Uterus (tissue), 4 donors: ENCODE measurements at regions of chr3 and their contacts with region 1.

Region 1: GRCh38 chr3:6644070-6644929 is 216.6 kb upstream of the GRM7 start:
- DNase-seq: no peak
- H3K4me3 ChIP-seq: no peak overlapping the region
- H3K27ac ChIP-seq: no peak overlapping the region
- H3K4me1 ChIP-seq: no peaks in the 10 kb centered on the region
- H3K27me3 ChIP-seq: no peaks in the 10 kb centered on the region
- CTCF ChIP-seq: no peak
- POLR2A ChIP-seq: no peak

Region 2: GRCh38 chr3:6416049-6416661 is 228.1 kb before region 1 on chr3:
- intact Hi-C with region 1: no loop called
- DNase-seq: no peak
- H3K4me3 ChIP-seq: no peak overlapping the region
- H3K27ac ChIP-seq: no peak overlapping the region
- H3K4me1 ChIP-seq: no peaks in the 10 kb centered on the region
- H3K27me3 ChIP-seq: no peaks in the 10 kb centered on the region
- CTCF ChIP-seq: no peak
- POLR2A ChIP-seq: no peak

Region 3: DNA sequence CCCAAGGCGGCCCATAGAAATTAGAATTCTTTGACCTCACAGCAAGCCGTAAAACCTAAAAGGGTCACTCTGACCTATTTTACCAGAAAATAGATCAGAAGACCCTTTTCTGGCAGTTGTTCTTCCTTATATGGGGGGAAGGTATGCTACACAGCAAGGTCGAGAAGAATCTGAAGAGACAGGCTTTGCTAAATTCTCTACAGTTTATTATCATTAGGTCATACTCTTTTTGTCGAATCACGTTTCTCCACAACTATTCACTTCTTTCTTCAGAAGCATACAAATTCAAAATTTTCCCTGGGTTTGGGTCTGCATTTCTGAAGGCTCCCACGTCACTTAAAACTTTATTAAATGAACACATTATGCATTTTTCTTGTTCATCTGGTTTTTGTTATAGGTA is 12.9 kb before region 1 on chr3:
- intact Hi-C with region 1: loop called (anchors 2 kb)
- DNase-seq: no peak
- H3K4me3 ChIP-seq: no peak overlapping the region
- H3K27ac ChIP-seq: no peak overlapping the region
- H3K4me1 ChIP-seq: no peaks in the 10 kb centered on the region
- H3K27me3 ChIP-seq: no peaks in the 10 kb centered on the region
- CTCF ChIP-seq: no peak
- POLR2A ChIP-seq: no peak

Region 4: GRCh38 chr3:7144696-7145308 is 500.5 kb after region 1 on chr3:
- intact Hi-C with region 1: no loop called
- DNase-seq: no peak
- H3K4me3 ChIP-seq: no peak overlapping the region
- H3K27ac ChIP-seq: no peak overlapping the region
- H3K4me1 ChIP-seq: no peaks in the 10 kb centered on the region
- H3K27me3 ChIP-seq: peaks cover 0 to 7% of the 10 kb centered on the region in 2 donors
- CTCF ChIP-seq: no peak
- POLR2A ChIP-seq: no peak